Activated T-helper 2 cell treated with anti-CD3 and anti-CD28 coated beads, Interferon-gamma antibody, Interleukin-2, Interleukin-4, amounts not matched to agents 10 μg/mL and 5 μg/mL and 100 μg/mL, durations not matched to agents 14 hours and 24 hours and 36 hours (primary cell): ENCODE measurements at regions of chr2 and their contacts with region 1.

Region 1: DNA sequence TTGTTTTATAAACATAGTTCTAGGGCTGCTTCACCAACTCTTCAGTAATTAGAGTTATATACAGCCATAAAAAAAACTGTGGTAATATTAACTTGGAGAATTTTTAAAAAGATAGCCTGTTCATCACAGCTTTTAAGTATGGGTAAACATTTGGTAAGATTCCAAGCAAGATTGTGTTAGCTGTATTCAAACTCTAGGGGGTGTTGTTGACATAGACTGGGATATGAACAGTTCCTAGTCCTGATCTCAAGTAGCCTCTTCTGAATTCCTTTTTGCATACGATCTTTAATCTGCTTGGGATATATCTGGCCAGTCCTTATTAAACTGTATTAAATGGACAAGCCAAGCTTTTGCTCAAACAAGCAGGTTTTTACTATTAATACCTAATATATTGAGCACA is 13.4 kb downstream of the NOP58 start:
- DNase-seq: no peak
- H3K4me3 Mint-ChIP-seq: no peak overlapping the region
- H3K27ac Mint-ChIP-seq: peak overlapping the region; percentile 52
- H3K4me1 Mint-ChIP-seq: peaks cover 29% of the 10 kb centered on the region
- H3K27me3 Mint-ChIP-seq: no peaks in the 10 kb centered on the region

Region 2: DNA sequence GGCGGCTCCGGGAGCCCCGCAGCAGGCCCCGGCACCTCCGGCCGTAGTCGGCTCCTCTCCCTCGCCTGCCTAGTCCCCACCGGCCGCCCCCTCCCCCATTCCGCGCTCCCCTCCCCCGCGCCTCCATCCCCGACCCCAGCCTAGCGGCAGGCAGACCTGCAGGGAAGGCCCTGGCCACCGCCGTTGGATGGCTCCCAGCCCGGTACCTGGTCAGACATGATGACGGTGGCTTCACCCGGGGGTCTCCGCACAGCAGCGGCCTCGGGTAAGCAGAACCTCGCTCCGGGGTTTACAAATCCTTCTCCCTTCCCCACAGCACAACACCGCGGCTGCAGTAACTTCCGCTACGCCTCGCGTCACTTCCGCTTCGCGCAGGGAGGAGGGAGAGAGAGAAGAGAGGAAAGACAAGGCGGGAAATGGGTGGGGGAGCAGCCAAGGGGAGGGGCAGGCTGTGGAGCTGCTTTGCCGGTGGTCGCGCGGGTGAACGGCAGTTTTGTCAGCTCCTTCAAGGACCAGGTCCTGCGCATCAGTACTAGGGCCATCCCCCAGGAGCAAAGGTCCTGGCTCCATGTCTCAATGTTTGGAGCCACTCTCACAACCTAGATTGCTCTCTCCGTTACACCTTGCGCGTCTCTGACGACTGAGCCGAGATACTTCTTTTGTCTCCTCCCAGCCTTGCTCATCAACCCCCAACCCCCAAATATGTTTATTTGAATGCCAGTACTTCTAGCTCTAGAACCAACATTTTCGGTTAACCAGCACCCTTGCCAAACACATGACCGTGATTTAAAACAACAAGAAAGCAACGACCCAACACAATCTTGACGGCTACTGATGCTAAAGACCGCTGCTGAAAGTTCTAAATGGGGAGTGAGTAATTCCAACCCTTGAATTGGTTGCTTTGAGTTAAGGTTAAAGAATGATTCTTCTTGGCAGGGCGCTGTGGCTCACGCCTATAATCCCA is 40.4 kb before region 1 on chr2 and contains the start of gene SUMO1:
- intact Hi-C with region 1: loop called (anchors 1 kb)
- DNase-seq: peak; percentile 88
- H3K4me3 Mint-ChIP-seq: peak within 1 kb of the TSS; percentile 98
- H3K27ac Mint-ChIP-seq: peak within 1 kb of the TSS; percentile 94
- H3K4me1 Mint-ChIP-seq: peaks cover 20% of the 10 kb centered on the region
- H3K27me3 Mint-ChIP-seq: no peaks in the 10 kb centered on the region
- total RNA-seq, gene SUMO1: 119 and 124 TPM in 2 replicates

Region 3: GRCh38 chr2:202299712-202300111 is 20.8 kb after region 1 on chr2:
- intact Hi-C with region 1: loop called (anchors 2 kb)
- DNase-seq: no peak
- H3K4me3 Mint-ChIP-seq: no peak overlapping the region
- H3K27ac Mint-ChIP-seq: peak overlapping the region; percentile 59
- H3K4me1 Mint-ChIP-seq: peaks cover 19% of the 10 kb centered on the region
- H3K27me3 Mint-ChIP-seq: no peaks in the 10 kb centered on the region